Activated T-helper 2 cell treated with anti-CD3 and anti-CD28 coated beads, Interferon-gamma antibody, Interleukin-2, Interleukin-4, amounts not matched to agents 10 μg/mL and 5 μg/mL and 100 μg/mL, durations not matched to agents 14 hours and 24 hours and 36 hours (primary cell): ENCODE measurements at regions of chr3 and their contacts with region 1.

Region 1: DNA sequence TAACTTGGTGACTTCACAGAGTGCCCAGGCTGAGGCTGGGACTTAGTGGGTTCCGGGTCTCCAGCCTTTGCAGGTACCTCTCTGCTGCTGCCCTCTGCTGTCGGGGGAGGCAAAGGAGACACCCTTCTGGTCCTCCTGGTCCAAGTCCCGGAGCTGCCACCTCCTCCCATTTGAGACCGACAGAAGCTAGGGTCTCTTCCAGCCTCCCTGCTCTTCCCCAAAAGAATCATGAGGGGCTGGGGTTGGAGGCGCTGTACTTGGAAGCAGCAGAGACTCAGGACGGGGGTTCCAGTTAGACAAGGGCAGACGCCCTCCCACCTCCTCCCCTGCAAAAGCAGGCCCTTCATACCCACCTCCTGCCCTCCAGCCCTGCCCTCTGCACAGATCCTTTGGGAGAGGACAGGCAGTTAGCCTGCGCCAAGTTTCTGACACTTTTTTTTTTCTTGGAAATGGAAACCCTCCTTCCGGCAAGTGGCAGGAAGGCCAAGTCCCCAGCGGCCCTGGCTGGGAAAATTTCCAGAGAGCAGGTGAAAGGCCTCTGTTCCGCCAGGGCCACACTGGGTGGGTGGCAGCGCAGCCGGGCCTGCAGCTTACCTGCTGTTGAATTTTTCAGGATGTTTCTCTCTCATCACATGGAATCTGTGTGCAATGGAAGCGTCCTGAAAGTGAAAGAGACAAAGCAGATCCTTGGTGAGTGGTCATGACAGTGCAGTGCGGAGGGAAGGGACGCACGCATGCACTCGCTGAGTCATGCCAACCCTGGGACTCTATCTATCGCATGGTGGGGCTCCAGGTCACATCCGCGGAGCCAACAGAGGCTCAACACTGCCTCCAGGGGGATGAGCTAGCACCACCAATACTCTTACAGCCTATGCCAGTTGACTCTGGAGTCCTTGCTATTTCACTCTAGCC is 119.9 kb downstream of the DGKG start:
- DNase-seq: peak; percentile 35
- H3K4me3 Mint-ChIP-seq: no peak overlapping the region
- H3K27ac Mint-ChIP-seq: no peak overlapping the region
- H3K4me1 Mint-ChIP-seq: peaks cover 12% of the 10 kb centered on the region
- H3K27me3 Mint-ChIP-seq: peaks cover 33% of the 10 kb centered on the region

Region 2: DNA sequence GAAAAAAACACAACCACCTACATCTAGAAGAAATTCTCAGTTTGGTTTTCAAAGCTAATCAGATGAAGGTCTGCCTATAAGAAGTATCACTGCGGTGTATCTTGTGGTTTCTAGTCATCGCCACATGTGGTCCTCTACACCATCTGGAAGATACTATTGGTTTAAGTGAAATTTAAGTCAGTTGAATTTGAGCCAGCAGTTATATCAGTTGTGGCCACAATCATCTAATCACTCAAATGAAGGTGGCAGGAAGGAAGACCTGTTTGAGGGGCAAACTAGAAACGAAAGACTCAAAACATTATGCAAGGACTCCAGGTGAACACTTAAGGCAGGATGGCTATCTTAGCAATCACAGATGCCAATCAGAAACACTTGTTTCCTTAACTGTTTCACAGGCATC is 181.9 kb before region 1 on chr3:
- intact Hi-C with region 1: loop called (anchors 10 kb)
- DNase-seq: peak; percentile 24
- H3K4me3 Mint-ChIP-seq: no peak overlapping the region
- H3K27ac Mint-ChIP-seq: no peak overlapping the region
- H3K4me1 Mint-ChIP-seq: peaks cover 12% of the 10 kb centered on the region
- H3K27me3 Mint-ChIP-seq: peaks cover 70% of the 10 kb centered on the region

Region 3: GRCh38 chr3:187227658-187228258 is 985.6 kb after region 1 on chr3:
- intact Hi-C with region 1: no loop called
- DNase-seq: no peak
- H3K4me3 Mint-ChIP-seq: no peak overlapping the region
- H3K27ac Mint-ChIP-seq: no peak overlapping the region
- H3K4me1 Mint-ChIP-seq: no peaks in the 10 kb centered on the region
- H3K27me3 Mint-ChIP-seq: peaks cover 18% of the 10 kb centered on the region